ENCODE measurements at regions of chr19 and their contacts with region 1.

Region 1: GRCh38 chr19:34171877-34172660 is at the start of gene LSM14A:
- DNase-seq: peak; percentile 91
- ATAC-seq: peak; percentile 88
- H3K4me3 Mint-ChIP-seq: peak within 1 kb of the TSS; percentile 98
- H3K27ac Mint-ChIP-seq: peak within 1 kb of the TSS; percentile 99
- H3K4me1 Mint-ChIP-seq: peaks cover 40% of the 10 kb centered on the region
- H3K27me3 Mint-ChIP-seq: peaks cover 2% of the 10 kb centered on the region
- total RNA-seq, gene LSM14A: 133 to 139 TPM

Region 2: DNA sequence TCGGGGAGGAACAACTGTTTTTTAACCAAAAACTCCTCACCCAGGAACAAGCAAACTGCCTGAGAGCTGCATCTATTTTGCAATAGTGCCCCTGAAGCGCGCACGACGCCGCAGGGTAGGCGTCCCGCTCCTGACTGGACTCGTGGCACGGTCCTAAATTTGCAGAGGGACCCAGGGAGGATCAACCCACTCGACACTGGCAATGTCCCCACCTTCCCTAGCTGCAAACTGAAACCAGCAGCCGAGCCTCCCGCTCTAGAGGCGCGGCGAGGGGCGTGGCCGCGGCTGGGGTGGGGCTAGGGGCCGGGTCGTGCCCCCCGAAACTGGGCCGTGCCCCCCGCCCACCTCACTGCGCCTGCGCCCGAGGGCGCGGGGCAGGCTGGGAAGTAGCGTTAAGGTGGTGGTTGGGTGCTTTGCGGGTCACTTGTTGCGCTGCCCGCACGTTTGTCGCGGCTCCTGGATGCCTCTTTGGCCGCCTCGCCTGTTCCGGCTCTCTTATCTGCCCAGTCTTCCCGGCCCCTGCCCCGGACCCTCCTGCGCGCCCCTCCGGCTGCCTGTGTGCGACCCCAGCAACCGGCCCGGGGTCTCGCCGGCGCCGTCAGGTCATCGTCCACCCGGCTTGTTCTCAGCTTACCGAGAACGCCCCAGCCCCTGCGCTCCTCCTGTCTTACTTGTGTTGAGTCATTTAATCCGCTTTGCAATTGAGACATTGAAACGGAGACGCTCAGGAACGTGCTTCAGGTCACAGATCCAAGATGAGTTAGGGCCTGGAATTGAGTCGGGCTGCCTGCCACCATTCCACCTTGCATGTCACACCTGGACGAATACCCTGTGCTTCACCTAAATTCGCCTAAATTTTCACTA is 37.6 kb before region 1 on chr19:
- CTCF ChIA-PET with region 1: interaction called, 3 read pairs
- POLR2A ChIA-PET with region 1: interaction called, 11 read pairs
- DNase-seq: peak; percentile 94
- ATAC-seq: peak; percentile 97
- H3K4me3 Mint-ChIP-seq: peak overlapping the region; percentile 87
- H3K27ac Mint-ChIP-seq: peak overlapping the region; percentile 91
- H3K4me1 Mint-ChIP-seq: peaks cover 9% of the 10 kb centered on the region
- H3K27me3 Mint-ChIP-seq: peaks cover 2% of the 10 kb centered on the region

Region 3: GRCh38 chr19:34184880-34185491 is 12.9 kb after region 1 on chr19:
- CTCF ChIA-PET with region 1: interaction called, 5 read pairs
- POLR2A ChIA-PET with region 1: interaction called, 10 read pairs
- DNase-seq: no peak
- ATAC-seq: no peak
- H3K4me3 Mint-ChIP-seq: no peak overlapping the region
- H3K27ac Mint-ChIP-seq: peak overlapping the region; percentile 4
- H3K4me1 Mint-ChIP-seq: peaks cover 51% of the 10 kb centered on the region
- H3K27me3 Mint-ChIP-seq: no peaks in the 10 kb centered on the region

Measured in activated CD8-positive, alpha-beta T cell treated with anti-CD3 and anti-CD28 coated beads, Interleukin-2, amount 10 ng/mL, durations not matched to agents 7 days and 5 days (primary cell).